ENCODE measurements at regions of chr1 and their contacts with region 1.

Region 1: GRCh38 chr1:97094280-97094972 is 372.8 kb downstream of the PTBP2 start:
- DNase-seq: peak in 1 of 2 experiments; percentile 12
- H3K4me3 ChIP-seq: no peak overlapping the region
- H3K4me3 Mint-ChIP-seq: no peak overlapping the region
- H3K27ac Mint-ChIP-seq: no peak overlapping the region
- H3K4me1 ChIP-seq: peaks cover 15% of the 10 kb centered on the region; the same call in 1 of the 2 replicates
- H3K4me1 Mint-ChIP-seq: peaks cover 20% of the 10 kb centered on the region
- H3K27me3 ChIP-seq: no peaks in the 10 kb centered on the region
- H3K27me3 Mint-ChIP-seq: no peaks in the 10 kb centered on the region
- CTCF ChIP-seq: no peak

Region 2: GRCh38 chr1:97137862-97138514 is 43.6 kb after region 1 on chr1:
- CTCF ChIA-PET with region 1: no interaction called
- POLR2A ChIA-PET with region 1: no interaction called
- intact Hi-C with region 1: loop called (anchors 2 kb)
- DNase-seq: peak; percentile 24 to 27
- H3K4me3 ChIP-seq: no peak overlapping the region
- H3K4me3 Mint-ChIP-seq: no peak overlapping the region
- H3K27ac Mint-ChIP-seq: no peak overlapping the region
- H3K4me1 ChIP-seq: peaks cover 7% of the 10 kb centered on the region; the same call in 1 of the 2 replicates
- H3K4me1 Mint-ChIP-seq: peaks cover 9% of the 10 kb centered on the region
- H3K27me3 ChIP-seq: no peaks in the 10 kb centered on the region
- H3K27me3 Mint-ChIP-seq: no peaks in the 10 kb centered on the region
- CTCF ChIP-seq: peak; percentile 36 to 44